ENCODE measurements at regions of chr6 and their contacts with region 1.

Region 1: GRCh38 chr6:134720353-134721059 is 229.4 kb downstream of the ALDH8A1 start:
- DNase-seq: peak in 3 of 5 donors; percentile 35 to 63 (median 46)
- ATAC-seq: peak; percentile 62 to 85 (median 77)
- H3K4me3 ChIP-seq: no peak overlapping the region
- H3K27ac ChIP-seq: peak overlapping the region; percentile 34 to 83 (median 69)
- H3K4me1 ChIP-seq: peaks cover 5 to 65% (median 46%) of the 10 kb centered on the region in 12 donors
- H3K27me3 ChIP-seq: no peaks in the 10 kb centered on the region
- CTCF ChIP-seq: no peak
- POLR2A ChIP-seq: no peak

Region 2: DNA sequence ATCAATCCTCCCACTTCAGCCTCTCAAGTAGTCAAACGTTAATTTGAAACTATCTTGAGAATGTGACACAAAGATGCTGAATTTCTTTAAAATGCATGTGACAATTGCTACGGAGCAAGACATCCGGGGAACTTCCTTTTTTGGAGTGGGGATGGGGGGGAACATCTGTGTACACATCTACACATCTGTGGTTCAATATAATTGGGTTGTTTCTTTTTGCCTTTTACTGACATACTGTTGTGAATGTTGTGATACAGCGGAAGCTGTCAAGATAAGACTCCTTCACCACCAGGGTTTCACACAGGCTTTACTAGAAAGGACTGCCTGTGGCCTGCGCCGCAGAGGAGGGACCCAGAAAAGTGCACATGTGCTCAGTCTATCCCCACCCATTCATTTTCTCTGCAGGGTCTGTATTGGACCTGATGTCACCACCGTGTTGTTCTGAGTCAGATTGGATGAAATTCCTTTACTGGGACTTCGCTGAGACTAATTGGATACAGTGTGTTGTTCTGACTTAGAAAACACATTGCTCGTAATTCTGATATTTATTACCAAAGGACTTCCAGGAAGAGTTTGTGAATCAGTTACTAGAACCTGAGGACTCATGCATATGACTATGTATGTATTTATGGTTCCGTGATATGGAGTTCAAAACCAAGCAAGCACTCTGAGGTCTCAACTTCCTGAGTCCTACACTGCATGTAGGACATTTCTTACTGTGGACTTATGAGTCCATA is 303.9 kb before region 1 on chr6:
- intact Hi-C with region 1: loop called in 1 of 10 experiments (anchors 5 kb)
- DNase-seq: no peak
- ATAC-seq: no peak
- H3K4me3 ChIP-seq: no peak overlapping the region
- H3K27ac ChIP-seq: peak overlapping the region in 2 of 12 donors; percentile 38 to 78
- H3K4me1 ChIP-seq: peaks cover 0 to 41% (median 2%) of the 10 kb centered on the region in 12 donors
- H3K27me3 ChIP-seq: no peaks in the 10 kb centered on the region
- CTCF ChIP-seq: no peak
- POLR2A ChIP-seq: no peak

Region 3: GRCh38 chr6:134537146-134537555 is 183.4 kb before region 1 on chr6:
- intact Hi-C with region 1: loop called in 3 of 10 experiments (anchors 10 kb)
- DNase-seq: no peak
- ATAC-seq: no peak
- H3K4me3 ChIP-seq: no peak overlapping the region
- H3K27ac ChIP-seq: no peak overlapping the region
- H3K4me1 ChIP-seq: peaks cover 3 to 38% (median 14%) of the 10 kb centered on the region in 12 donors
- H3K27me3 ChIP-seq: no peaks in the 10 kb centered on the region
- CTCF ChIP-seq: no peak
- POLR2A ChIP-seq: no peak

Region 4: GRCh38 chr6:134882426-134883038 is 162.0 kb after region 1 on chr6:
- intact Hi-C with region 1: no loop called
- DNase-seq: peak in 4 of 5 donors; percentile 21 to 67 (median 49)
- ATAC-seq: peak in 3 of 4 donors; percentile 36 to 68 (median 65)
- H3K4me3 ChIP-seq: no peak overlapping the region
- H3K27ac ChIP-seq: no peak overlapping the region
- H3K4me1 ChIP-seq: peaks cover 0 to 5% (median 0%) of the 10 kb centered on the region in 12 donors
- H3K27me3 ChIP-seq: peaks cover 0 to 3% (median 0%) of the 10 kb centered on the region in 9 donors
- CTCF ChIP-seq: peak; percentile 52 to 99 (median 88)
- POLR2A ChIP-seq: no peak

Measured in heart left ventricle (tissue), 16 donors.